ENCODE measurements at regions of chr2 and their contacts with region 1.

Region 1: GRCh38 chr2:37585982-37586621 is 85.3 kb downstream of the CDC42EP3 start:
- DNase-seq: peak; percentile 79 to 90 (median 82)
- H3K4me3 ChIP-seq: peak overlapping the region in 1 of 3 experiments; percentile 19
- H3K4me3 Mint-ChIP-seq: peak overlapping the region in 1 of 2 donors; percentile 77
- H3K27ac ChIP-seq: peak overlapping the region in 1 of 2 donors; percentile 14
- H3K27ac Mint-ChIP-seq: peak overlapping the region in 4 of 7 donors; percentile 46 to 69 (median 53)
- H3K4me1 ChIP-seq: peaks cover 33 to 44% of the 10 kb centered on the region in 2 donors
- H3K4me1 Mint-ChIP-seq: peaks cover 56% of the 10 kb centered on the region
- H3K27me3 ChIP-seq: peaks cover 0 to 2% of the 10 kb centered on the region in 2 donors
- H3K27me3 Mint-ChIP-seq: peaks cover 4 to 10% (median 6%) of the 10 kb centered on the region in 3 donors
- CTCF ChIP-seq: no peak

Region 2: DNA sequence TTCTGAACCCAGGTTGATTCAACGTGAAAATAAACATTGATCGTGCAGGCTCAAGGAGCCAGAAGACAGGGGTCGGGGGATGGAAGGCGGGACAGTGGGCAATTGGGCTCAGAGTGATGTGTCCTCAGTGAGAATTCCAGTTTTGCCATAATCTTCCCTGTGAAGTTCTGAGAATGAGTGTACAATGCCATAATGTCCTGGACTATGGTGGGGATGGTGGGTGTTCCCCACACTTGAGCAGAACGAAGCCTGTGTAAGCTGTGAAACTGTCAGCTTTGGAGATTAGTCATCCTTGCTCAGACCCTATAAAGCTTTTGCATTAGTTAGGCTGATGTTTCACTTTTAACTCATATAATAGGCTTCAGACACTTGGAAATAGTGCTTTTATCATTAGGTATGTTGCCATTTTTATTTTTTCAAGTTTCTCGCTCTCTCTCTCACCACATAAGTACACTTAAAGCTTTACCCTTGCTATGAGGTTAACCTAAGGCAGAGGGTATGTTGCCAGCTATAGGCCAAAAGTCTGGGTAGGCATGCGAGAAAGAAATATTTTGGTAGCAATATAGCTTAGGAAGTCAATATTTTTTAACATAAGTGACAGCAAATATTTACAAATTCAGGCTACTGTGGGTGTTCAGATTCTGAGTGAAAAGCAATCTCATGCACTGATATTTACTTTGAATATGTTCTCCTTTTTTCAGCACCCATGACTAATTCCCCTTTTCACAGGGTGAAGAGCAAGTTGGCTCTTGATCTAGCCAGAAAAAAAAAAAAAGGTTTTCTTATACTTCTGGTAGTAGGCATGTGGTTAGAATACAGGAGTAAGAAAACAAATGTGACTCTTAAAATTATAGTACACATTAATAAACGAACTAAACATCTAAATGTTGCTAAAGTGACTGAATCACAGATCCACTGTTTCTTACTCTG is 38.1 kb after region 1 on chr2:
- intact Hi-C with region 1: loop called in 1 of 2 experiments (anchors 5 kb)
- DNase-seq: peak; percentile 70 to 85 (median 79)
- H3K4me3 ChIP-seq: no peak overlapping the region
- H3K4me3 Mint-ChIP-seq: no peak overlapping the region
- H3K27ac ChIP-seq: peak overlapping the region; percentile 4 to 91
- H3K27ac Mint-ChIP-seq: peak overlapping the region; percentile 84 to 94 (median 89)
- H3K4me1 ChIP-seq: peaks cover 27 to 51% of the 10 kb centered on the region in 2 donors
- H3K4me1 Mint-ChIP-seq: peaks cover 55% of the 10 kb centered on the region
- H3K27me3 ChIP-seq: no peaks in the 10 kb centered on the region
- H3K27me3 Mint-ChIP-seq: peaks cover 0 to 3% (median 0%) of the 10 kb centered on the region in 3 donors
- CTCF ChIP-seq: no peak

Region 3: GRCh38 chr2:37635504-37636380 is 49.6 kb after region 1 on chr2:
- intact Hi-C with region 1: loop called in 1 of 2 experiments (anchors 5 kb)
- DNase-seq: peak; percentile 97 to 100 (median 99)
- H3K4me3 ChIP-seq: peak overlapping the region in 1 of 3 experiments; percentile 26
- H3K4me3 Mint-ChIP-seq: peak overlapping the region; percentile 34 to 48
- H3K27ac ChIP-seq: peak overlapping the region; percentile 98 to 99
- H3K27ac Mint-ChIP-seq: peak overlapping the region; percentile 99 to 100 (median 99)
- H3K4me1 ChIP-seq: peaks cover 50 to 60% of the 10 kb centered on the region in 2 donors
- H3K4me1 Mint-ChIP-seq: peaks cover 59% of the 10 kb centered on the region
- H3K27me3 ChIP-seq: no peaks in the 10 kb centered on the region
- H3K27me3 Mint-ChIP-seq: peaks cover 0 to 4% (median 2%) of the 10 kb centered on the region in 3 donors
- CTCF ChIP-seq: no peak

Measured in CD14-positive monocyte (primary cell).